ENCODE measurements at regions of chr9 and their contacts with region 1.

Region 1: GRCh38 chr9:120936011-120936763 is 9.6 kb upstream of the TRAF1 start:
- DNase-seq: peak; percentile 92
- H3K4me3 ChIP-seq: peak overlapping the region; percentile 49
- H3K27ac ChIP-seq: peak overlapping the region; percentile 96
- H3K4me1 ChIP-seq: peaks cover 81% of the 10 kb centered on the region
- CTCF ChIP-seq: peak; percentile 100

Region 2: GRCh38 chr9:120792898-120793765 is 143.1 kb before region 1 on chr9 and contains the start of gene FBXW2:
- CTCF ChIA-PET with region 1: no interaction called
- POLR2A ChIA-PET with region 1: no interaction called
- intact Hi-C with region 1: loop called (anchors 2 kb)
- DNase-seq: peak; percentile 93
- H3K4me3 ChIP-seq: peak within 1 kb of the TSS; percentile 78
- H3K27ac ChIP-seq: peak within 1 kb of the TSS; percentile 71
- H3K4me1 ChIP-seq: peaks cover 35% of the 10 kb centered on the region
- CTCF ChIP-seq: no peak
- total RNA-seq, gene FBXW2: 30.0 and 32.7 TPM in 2 replicates

Region 3: GRCh38 chr9:120868676-120869359 is 67.4 kb before region 1 on chr9:
- CTCF ChIA-PET with region 1: interaction called, 3 read pairs
- POLR2A ChIA-PET with region 1: interaction called, 6 read pairs
- intact Hi-C with region 1: loop called (anchors 1 kb)
- DNase-seq: peak; percentile 95
- H3K4me3 ChIP-seq: peak overlapping the region; percentile 57
- H3K27ac ChIP-seq: peak overlapping the region; percentile 17
- H3K4me1 ChIP-seq: peaks cover 32% of the 10 kb centered on the region
- CTCF ChIP-seq: peak; percentile 81

Region 4: GRCh38 chr9:120892748-120893610 is 43.2 kb before region 1 on chr9:
- CTCF ChIA-PET with region 1: interaction called, 4 read pairs
- POLR2A ChIA-PET with region 1: interaction called, 372 read pairs
- intact Hi-C with region 1: loop called (anchors 1 kb)
- DNase-seq: peak; percentile 97
- H3K4me3 ChIP-seq: peak overlapping the region; percentile 7
- H3K27ac ChIP-seq: peak overlapping the region; percentile 98
- H3K4me1 ChIP-seq: peaks cover 95% of the 10 kb centered on the region
- CTCF ChIP-seq: no peak